ENCODE measurements at regions of chr9 and their contacts with region 1.

Region 1: GRCh38 chr9:126490871-126491567 is 122.7 kb upstream of the LMX1B start:
- DNase-seq: peak in 1 of 3 donors; percentile 30
- ATAC-seq: peak; percentile 67 to 83 (median 78)
- H3K4me3 ChIP-seq: no peak overlapping the region
- H3K27ac ChIP-seq: no peak overlapping the region
- H3K4me1 ChIP-seq: no peaks in the 10 kb centered on the region
- H3K27me3 ChIP-seq: no peaks in the 10 kb centered on the region
- CTCF ChIP-seq: peak; percentile 88 to 94 (median 90)
- POLR2A ChIP-seq: no peak

Region 2: GRCh38 chr9:126317513-126317912 is 173.5 kb before region 1 on chr9:
- intact Hi-C with region 1: loop called in 1 of 2 experiments (anchors 10 kb)
- DNase-seq: no peak
- ATAC-seq: peak; percentile 83 to 95 (median 88)
- H3K4me3 ChIP-seq: no peak overlapping the region
- H3K27ac ChIP-seq: no peak overlapping the region
- H3K4me1 ChIP-seq: no peaks in the 10 kb centered on the region
- H3K27me3 ChIP-seq: no peaks in the 10 kb centered on the region
- CTCF ChIP-seq: peak; percentile 47 to 58 (median 53)
- POLR2A ChIP-seq: no peak

Measured in right lobe of liver (tissue), 6 donors.